ENCODE measurements at regions of chr10 and their contacts with region 1.

Region 1: GRCh38 chr10:81248886-81249285 is 626.1 kb upstream of the NRG3 start:
- DNase-seq: no peak

Region 2: DNA sequence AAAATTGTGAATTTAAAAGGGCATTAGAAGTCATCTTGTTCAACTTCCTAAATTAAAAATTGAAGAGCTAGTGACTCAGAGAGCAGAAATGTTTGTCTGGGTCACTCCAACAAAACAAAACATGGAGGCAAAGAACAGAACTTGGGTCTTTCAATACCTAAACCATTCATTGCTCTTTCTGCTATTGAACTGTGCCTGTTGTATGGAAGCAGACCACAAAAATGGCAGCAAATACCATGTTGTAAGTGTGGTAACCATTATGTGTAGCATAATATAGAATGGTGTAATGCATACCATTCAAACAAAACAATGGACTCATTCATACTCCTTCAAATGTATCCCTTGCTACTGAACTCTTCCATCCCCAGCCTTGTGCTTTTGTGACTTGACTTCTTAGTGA is 265.9 kb after region 1 on chr10:
- intact Hi-C with region 1: loop called in 1 of 2 experiments (anchors 5 kb)
- DNase-seq: no peak